ENCODE measurements at regions of chr14 and their contacts with region 1.

Region 1: GRCh38 chr14:89720741-89721315 is 233.7 kb downstream of the EFCAB11 start:
- DNase-seq: peak; percentile 73
- ATAC-seq: peak; percentile 85
- H3K4me3 Mint-ChIP-seq: peak overlapping the region; percentile 74
- H3K27ac Mint-ChIP-seq: peak overlapping the region; percentile 95
- H3K4me1 Mint-ChIP-seq: peaks cover 69% of the 10 kb centered on the region
- H3K27me3 Mint-ChIP-seq: no peaks in the 10 kb centered on the region

Region 2: GRCh38 chr14:89185919-89186855 is 534.6 kb before region 1 on chr14:
- POLR2A ChIA-PET with region 1: no interaction called
- DNase-seq: no peak
- ATAC-seq: no peak
- H3K4me3 Mint-ChIP-seq: no peak overlapping the region
- H3K27ac Mint-ChIP-seq: no peak overlapping the region
- H3K4me1 Mint-ChIP-seq: peaks cover 10% of the 10 kb centered on the region
- H3K27me3 Mint-ChIP-seq: no peaks in the 10 kb centered on the region

Region 3: GRCh38 chr14:89669193-89669592 is 51.6 kb before region 1 on chr14:
- POLR2A ChIA-PET with region 1: interaction called, 11 read pairs
- DNase-seq: peak; percentile 69
- ATAC-seq: peak; percentile 91
- H3K4me3 Mint-ChIP-seq: peak overlapping the region; percentile 55
- H3K27ac Mint-ChIP-seq: peak overlapping the region; percentile 66
- H3K4me1 Mint-ChIP-seq: peaks cover 29% of the 10 kb centered on the region
- H3K27me3 Mint-ChIP-seq: no peaks in the 10 kb centered on the region

Region 4: GRCh38 chr14:89681086-89682018 is 39.5 kb before region 1 on chr14:
- POLR2A ChIA-PET with region 1: interaction called, 15 read pairs
- DNase-seq: peak; percentile 33
- ATAC-seq: peak; percentile 64
- H3K4me3 Mint-ChIP-seq: peak overlapping the region; percentile 68
- H3K27ac Mint-ChIP-seq: peak overlapping the region; percentile 89
- H3K4me1 Mint-ChIP-seq: peaks cover 32% of the 10 kb centered on the region
- H3K27me3 Mint-ChIP-seq: no peaks in the 10 kb centered on the region

Region 5: DNA sequence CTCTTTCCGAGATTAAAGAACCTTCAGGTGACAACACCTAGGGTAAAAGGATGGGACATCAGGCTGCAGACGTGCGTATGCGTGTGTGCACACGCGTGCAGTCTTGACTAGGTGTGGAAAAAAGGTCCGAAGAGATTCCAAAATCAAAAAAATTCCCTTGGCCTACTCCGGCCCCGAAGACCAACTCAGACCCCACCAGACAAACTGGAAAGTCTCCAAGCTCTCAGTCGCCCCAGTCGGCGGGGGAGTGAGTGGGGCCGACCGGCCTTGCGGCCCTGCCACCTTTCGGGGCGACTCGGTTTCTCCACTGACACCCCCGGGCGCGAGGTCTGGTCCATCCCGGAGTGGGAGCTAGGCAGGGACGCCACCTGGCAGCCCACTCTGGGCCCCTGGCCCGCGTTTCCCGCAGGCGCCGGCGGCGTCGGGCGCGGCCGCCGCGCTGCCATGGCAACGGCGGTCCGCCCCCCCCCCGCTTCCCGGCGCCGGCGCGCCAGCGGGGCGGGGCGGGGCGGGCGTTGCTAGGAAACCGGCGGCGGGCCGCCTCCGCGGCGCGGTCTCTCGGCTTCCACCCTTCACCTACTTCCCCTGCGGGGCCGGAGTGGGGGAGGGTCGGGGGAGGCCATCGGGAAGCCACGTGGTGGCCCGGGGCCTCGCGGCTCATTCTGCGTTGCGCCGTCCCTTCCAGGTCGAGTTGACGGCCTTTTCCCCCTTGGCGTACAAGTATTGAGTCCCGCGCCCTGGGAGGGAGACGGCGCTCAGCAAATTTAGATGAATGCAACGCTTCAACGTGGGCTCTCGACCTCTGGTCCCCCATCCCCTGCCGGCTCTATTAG is 19.4 kb before region 1 on chr14:
- POLR2A ChIA-PET with region 1: interaction called, 12 read pairs
- DNase-seq: peak; percentile 89
- ATAC-seq: peak; percentile 81
- H3K4me3 Mint-ChIP-seq: peak overlapping the region; percentile 73
- H3K27ac Mint-ChIP-seq: peak overlapping the region; percentile 88
- H3K4me1 Mint-ChIP-seq: peaks cover 39% of the 10 kb centered on the region
- H3K27me3 Mint-ChIP-seq: no peaks in the 10 kb centered on the region